ENCODE measurements at regions of chr15 and their contacts with region 1.

Region 1: GRCh38 chr15:34284937-34285336 is 52.6 kb downstream of the SLC12A6 start:
- DNase-seq: no peak
- ATAC-seq: no peak

Region 2: GRCh38 chr15:34342737-34343575 is 58.0 kb after region 1 on chr15 and contains the starts of genes NOP10 and NUTM1:
- intact Hi-C with region 1: no loop called
- DNase-seq: peak; percentile 95
- ATAC-seq: peak; percentile 98
- total RNA-seq, gene NOP10: 90.2 TPM
- total RNA-seq, gene NUTM1: not detected

Region 3: DNA sequence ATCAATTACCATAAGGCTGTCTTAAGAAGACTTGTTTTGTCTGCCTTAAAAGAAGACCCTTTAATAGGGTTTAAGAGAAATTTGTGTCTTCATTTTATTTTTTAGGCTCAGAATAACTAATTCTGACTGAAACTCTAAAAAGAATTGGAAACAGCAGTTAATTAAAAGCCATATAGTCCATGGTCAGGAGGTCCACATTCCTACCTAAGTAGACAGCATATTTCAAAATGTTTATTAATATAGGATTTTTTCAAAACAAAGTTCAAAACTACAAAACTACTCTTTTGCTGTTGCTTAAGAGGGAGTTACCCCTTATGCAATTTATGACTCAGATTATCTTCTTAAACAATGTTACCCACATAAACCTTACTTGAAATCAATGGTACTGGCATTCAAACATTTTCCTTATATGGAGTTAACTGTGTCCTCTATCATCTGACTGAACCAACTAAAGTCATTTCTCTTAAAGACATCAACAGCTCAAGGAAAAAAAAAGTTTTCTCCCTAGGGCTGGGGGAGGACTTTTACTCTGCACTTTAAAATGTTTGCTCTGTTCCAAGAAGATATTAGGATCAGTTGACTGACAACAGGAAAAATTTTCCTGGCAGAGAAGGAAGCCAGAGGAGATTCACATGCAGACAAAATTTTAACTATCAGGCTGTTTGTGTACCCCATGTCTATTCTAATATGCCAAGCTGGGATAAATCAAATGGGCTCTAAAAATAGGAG is 857.0 kb after region 1 on chr15:
- intact Hi-C with region 1: loop called (anchors 5 kb)
- DNase-seq: no peak
- ATAC-seq: peak; percentile 41

Measured in sciatic nerve (tissue), 2 donors.